Activated T-helper 1 cell treated with anti-CD3 and anti-CD28 coated beads, Interleukin-12 subunit alpha, Interleukin-12 subunit beta, Interleukin-2, Interleukin-4 antibody, amounts not matched to agents 30 ng/mL and 10 ng/mL and 1 ng/mL, durations not matched to agents 14 hours and 24 hours and 36 hours (primary cell): ENCODE measurements at regions of chr1 and their contacts with region 1.

Region 1: DNA sequence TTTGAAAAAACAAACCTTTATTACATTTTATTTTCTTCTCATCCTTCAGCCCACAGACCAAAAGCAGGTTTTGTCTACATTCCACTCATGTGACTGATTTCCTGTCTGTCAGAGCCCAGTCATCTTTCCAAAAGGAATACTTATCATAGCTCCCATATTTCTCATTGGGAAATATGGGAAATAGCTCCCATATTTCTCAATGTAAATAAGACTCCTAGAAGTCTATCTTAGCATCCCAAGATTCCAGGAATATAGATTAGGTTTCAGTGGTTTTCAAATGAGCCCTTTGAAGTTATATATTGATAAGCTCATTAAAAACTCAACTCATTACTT is 19.1 kb upstream of the NRDC start:
- DNase-seq: no peak
- H3K4me3 Mint-ChIP-seq: no peak overlapping the region
- H3K27ac Mint-ChIP-seq: no peak overlapping the region
- H3K4me1 Mint-ChIP-seq: no peaks in the 10 kb centered on the region
- H3K27me3 Mint-ChIP-seq: peaks cover 35% of the 10 kb centered on the region

Region 2: DNA sequence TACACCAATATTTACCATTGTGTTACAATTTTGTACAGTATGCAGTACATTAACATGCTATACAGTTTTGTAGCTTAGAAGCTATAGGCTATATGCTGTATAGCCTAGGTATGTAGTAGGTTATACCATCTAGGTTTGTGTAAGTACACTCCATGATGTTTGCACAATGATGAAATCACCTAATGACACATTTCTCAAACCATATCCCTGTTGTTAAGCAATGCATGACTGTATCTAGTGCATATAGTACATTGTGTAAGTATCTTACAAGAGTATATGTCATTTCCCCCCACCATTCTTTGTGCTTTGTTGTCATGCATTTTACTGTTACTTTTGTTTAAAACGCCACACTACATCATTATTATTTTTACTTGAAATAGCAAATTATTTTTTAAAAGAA is 727.3 kb before region 1 on chr1:
- intact Hi-C with region 1: no loop called
- DNase-seq: no peak
- H3K4me3 Mint-ChIP-seq: no peak overlapping the region
- H3K27ac Mint-ChIP-seq: no peak overlapping the region
- H3K4me1 Mint-ChIP-seq: no peaks in the 10 kb centered on the region
- H3K27me3 Mint-ChIP-seq: peaks cover 18% of the 10 kb centered on the region

Region 3: GRCh38 chr1:51369171-51369570 is 528.5 kb before region 1 on chr1:
- intact Hi-C with region 1: no loop called
- DNase-seq: no peak
- H3K4me3 Mint-ChIP-seq: no peak overlapping the region
- H3K27ac Mint-ChIP-seq: no peak overlapping the region
- H3K4me1 Mint-ChIP-seq: no peaks in the 10 kb centered on the region
- H3K27me3 Mint-ChIP-seq: no peaks in the 10 kb centered on the region

Region 4: DNA sequence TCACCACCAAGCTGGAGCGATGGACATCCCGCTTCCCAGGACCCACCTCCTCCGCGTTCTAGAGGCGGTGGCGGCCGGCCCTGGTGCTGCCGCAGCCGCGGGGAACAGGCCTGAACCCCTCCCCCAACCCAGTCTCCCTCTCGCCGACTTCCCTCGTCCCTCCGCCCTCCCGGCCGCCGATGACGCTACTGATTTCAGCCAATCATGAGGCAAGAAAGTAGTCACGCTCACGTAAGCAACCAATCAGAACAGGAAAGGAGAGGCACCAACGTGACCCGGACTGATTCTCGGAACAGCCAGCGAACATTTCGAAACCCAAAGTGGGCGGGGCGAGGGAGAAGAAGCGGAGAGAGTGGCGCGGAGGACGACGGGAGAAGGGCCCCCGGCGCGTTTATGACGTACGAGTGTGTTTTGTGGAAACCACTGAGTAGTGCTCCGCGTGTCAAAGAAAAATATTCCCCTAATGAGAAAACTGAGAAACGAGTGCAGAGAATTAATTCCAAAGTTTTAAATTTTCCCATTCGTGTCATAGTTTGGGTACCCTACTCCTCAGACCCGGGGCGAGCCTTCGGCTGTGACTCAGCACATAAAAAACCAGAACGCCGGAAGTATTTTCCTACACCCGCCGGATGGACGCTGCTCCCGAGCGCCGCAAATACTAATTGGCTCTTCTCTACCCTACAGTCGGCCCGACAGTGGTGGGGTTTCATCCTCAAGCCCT is 18.9 kb before region 1 on chr1 and contains the start of gene NRDC:
- intact Hi-C with region 1: no loop called
- DNase-seq: peak; percentile 99
- H3K4me3 Mint-ChIP-seq: no peak within 1 kb of the TSS
- H3K27ac Mint-ChIP-seq: no peak within 1 kb of the TSS
- H3K4me1 Mint-ChIP-seq: no peaks in the 10 kb centered on the region
- H3K27me3 Mint-ChIP-seq: peaks cover 14% of the 10 kb centered on the region
- total RNA-seq, gene NRDC: 177 and 185 TPM in 2 replicates

Region 5: GRCh38 chr1:52002038-52002917 is 104.6 kb after region 1 on chr1:
- intact Hi-C with region 1: loop called (anchors 1 kb)
- DNase-seq: peak; percentile 52
- H3K4me3 Mint-ChIP-seq: no peak overlapping the region
- H3K27ac Mint-ChIP-seq: no peak overlapping the region
- H3K4me1 Mint-ChIP-seq: no peaks in the 10 kb centered on the region
- H3K27me3 Mint-ChIP-seq: peaks cover 21% of the 10 kb centered on the region